ENCODE measurements at regions of chr11 and their contacts with region 1.

Region 1: GRCh38 chr11:60775420-60775961 is 9.6 kb upstream of the MS4A10 start:
- DNase-seq: peak; percentile 92
- H3K4me3 ChIP-seq: no peak overlapping the region
- H3K27ac ChIP-seq: no peak overlapping the region
- H3K4me1 ChIP-seq: peaks cover 0 to 11% (median 7%) of the 10 kb centered on the region in 4 donors
- H3K27me3 ChIP-seq: no peaks in the 10 kb centered on the region
- CTCF ChIP-seq: peak; percentile 53 to 89 (median 77)
- EP300 ChIP-seq: no peak
- POLR2A ChIP-seq: no peak

Region 2: GRCh38 chr11:60899046-60899936 is 123.8 kb after region 1 on chr11:
- intact Hi-C with region 1: loop called (anchors 2 kb)
- DNase-seq: peak; percentile 64
- H3K4me3 ChIP-seq: no peak overlapping the region
- H3K27ac ChIP-seq: peak overlapping the region in 1 of 4 donors; percentile 26
- H3K4me1 ChIP-seq: peaks cover 0 to 11% (median 5%) of the 10 kb centered on the region in 4 donors
- H3K27me3 ChIP-seq: no peaks in the 10 kb centered on the region
- CTCF ChIP-seq: peak; percentile 42 to 96 (median 92)
- EP300 ChIP-seq: no peak
- POLR2A ChIP-seq: no peak